Lower leg skin (tissue), 4 donors: ENCODE measurements at regions of chr2 and their contacts with region 1.

Region 1: GRCh38 chr2:178796079-178796677 is 11.0 kb downstream of the TTN start:
- DNase-seq: no peak
- H3K4me3 ChIP-seq: no peak overlapping the region
- CTCF ChIP-seq: no peak
- POLR2A ChIP-seq: no peak

Region 2: GRCh38 chr2:178914259-178914849 is 118.2 kb after region 1 on chr2:
- intact Hi-C with region 1: loop called (anchors 10 kb)
- DNase-seq: peak; percentile 77 to 94
- H3K4me3 ChIP-seq: no peak overlapping the region
- CTCF ChIP-seq: no peak
- POLR2A ChIP-seq: no peak